ENCODE measurements at regions of chr2 and their contacts with region 1.

Region 1: DNA sequence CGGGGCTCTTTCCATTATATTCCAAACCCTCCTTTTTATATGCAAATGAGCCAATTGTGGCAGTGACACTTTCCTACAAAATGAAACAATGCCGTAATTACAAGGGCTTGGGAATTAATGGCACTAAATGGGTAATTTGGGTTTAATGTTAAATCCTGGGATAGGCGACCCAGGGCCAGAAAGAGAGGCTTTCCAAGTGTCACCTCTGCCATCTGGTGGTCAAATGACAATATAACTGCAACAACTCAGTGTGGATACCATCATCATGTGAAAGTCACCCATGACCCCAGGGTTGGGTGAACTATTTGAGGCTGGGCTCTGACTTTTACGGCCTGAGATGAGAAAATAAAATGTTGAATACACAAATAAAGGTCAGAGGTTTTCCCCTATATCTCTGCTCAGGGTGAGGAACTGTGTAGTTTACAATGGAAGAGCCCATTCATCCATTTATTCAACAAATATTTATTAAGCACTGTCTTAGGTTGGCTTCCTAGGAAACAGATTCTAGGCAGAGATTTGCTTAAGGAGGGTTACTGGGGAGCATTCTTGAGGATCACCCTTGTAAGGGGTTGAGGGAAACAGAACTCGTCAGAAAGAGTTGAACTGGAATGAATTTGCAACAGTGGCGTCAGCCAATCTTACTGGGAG is 13.6 kb upstream of the THADA start:
- DNase-seq: no peak
- H3K4me3 ChIP-seq: no peak overlapping the region
- H3K27ac ChIP-seq: no peak overlapping the region
- H3K4me1 ChIP-seq: peaks cover 0 to 13% (median 3%) of the 10 kb centered on the region in 6 donors
- H3K27me3 ChIP-seq: no peaks in the 10 kb centered on the region
- CTCF ChIP-seq: peak in 9 of 11 experiments; percentile 42 to 75 (median 64)
- POLR2A ChIP-seq: no peak

Region 2: GRCh38 chr2:42828487-42829425 is 780.7 kb before region 1 on chr2:
- intact Hi-C with region 1: loop called (anchors 10 kb)
- DNase-seq: peak; percentile 93
- H3K4me3 ChIP-seq: no peak overlapping the region
- H3K27ac ChIP-seq: no peak overlapping the region
- H3K4me1 ChIP-seq: peaks cover 7 to 26% (median 17%) of the 10 kb centered on the region in 6 donors
- H3K27me3 ChIP-seq: no peaks in the 10 kb centered on the region
- CTCF ChIP-seq: peak; percentile 80 to 97 (median 90)
- POLR2A ChIP-seq: no peak

Measured in spleen (tissue), 13 donors.